Lower lobe of right lung (tissue), 2 donors: ENCODE measurements at regions of chr12 and their contacts with region 1.

Region 1: DNA sequence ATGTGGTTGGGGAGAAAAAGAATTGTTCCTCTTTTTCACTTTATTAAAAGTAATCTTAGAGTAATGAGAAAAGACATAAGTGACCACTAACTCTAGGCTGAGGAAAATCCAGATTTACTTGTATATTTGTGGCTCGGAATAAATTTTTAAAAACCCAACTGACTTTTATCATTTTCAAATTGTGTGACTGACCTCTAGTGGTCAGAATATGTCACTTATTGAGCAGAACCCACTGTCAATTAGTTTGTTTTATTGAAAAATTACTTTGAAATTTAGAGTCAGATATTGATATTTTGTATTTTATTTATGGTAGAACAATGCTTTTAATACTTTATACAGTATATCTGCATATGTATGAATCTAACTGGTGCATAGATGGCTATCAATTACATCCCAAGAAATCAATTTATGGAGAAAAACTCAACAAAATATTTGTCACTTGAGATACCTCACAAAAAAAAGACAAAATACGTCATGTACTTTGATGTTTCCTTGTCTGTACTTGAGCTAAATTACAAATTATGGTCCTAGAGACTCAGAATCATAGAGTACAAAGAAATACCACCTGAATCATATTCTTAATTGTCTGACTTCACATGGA is 229.4 kb downstream of the CNTN1 start:
- DNase-seq: no peak
- ATAC-seq: no peak
- H3K4me3 ChIP-seq: no peak overlapping the region
- H3K27ac ChIP-seq: no peak overlapping the region
- H3K4me1 ChIP-seq: no peaks in the 10 kb centered on the region
- H3K27me3 ChIP-seq: no peaks in the 10 kb centered on the region
- CTCF ChIP-seq: peak; percentile 65

Region 2: DNA sequence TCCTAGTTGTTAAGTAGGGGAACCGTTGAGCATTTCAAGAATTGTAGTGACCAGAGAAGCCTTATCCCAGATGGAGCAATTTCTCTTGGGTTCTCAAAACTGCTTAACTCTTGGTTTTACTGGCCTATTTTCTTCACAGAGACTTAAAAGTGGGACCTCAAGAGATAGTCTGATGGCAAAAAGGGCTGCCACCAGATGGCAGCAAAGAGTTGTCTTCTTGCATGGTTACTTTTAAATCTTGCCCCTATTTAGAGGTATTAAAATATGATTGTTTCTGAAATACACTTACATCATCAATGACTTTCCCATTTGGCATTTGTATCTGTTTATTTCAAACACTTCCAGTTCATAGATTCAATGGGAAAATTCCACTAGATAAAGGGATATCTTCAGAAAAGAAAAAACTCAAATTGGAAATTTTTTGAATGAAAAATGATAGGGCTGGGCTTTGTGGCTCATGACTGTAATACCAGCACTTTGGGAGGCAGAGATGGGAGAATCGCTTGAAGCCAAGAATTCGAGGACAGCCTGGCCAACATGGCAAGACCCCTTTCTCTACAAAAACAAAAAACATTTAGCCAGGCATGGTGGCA is 299.3 kb before region 1 on chr12:
- intact Hi-C with region 1: loop called (anchors 5 kb)
- DNase-seq: peak; percentile 48
- ATAC-seq: peak in 1 of 2 donors; percentile 65
- H3K4me3 ChIP-seq: no peak overlapping the region
- H3K27ac ChIP-seq: no peak overlapping the region
- H3K4me1 ChIP-seq: no peaks in the 10 kb centered on the region
- H3K27me3 ChIP-seq: no peaks in the 10 kb centered on the region
- CTCF ChIP-seq: peak; percentile 73

Region 3: DNA sequence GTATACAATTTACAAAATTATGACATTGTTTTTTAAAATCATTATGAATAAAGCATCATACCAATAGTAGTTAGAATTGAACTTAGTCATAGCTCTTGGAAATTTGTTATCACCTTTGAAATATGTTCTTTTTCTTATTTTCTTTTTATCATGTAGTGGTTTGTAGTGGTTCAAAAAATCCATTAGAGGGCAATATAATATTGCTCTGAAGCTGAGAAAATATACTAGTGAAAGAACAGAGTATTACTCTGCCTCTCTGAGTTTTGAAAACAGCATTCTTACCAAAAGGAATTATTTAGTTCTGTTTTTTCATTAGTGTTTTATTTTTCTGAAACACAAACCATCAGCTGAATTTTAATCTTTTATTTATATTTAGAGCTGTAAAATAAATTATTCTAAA is 342.6 kb after region 1 on chr12:
- intact Hi-C with region 1: no loop called
- DNase-seq: no peak
- ATAC-seq: no peak
- H3K4me3 ChIP-seq: no peak overlapping the region
- H3K27ac ChIP-seq: no peak overlapping the region
- H3K4me1 ChIP-seq: no peaks in the 10 kb centered on the region
- H3K27me3 ChIP-seq: no peaks in the 10 kb centered on the region
- CTCF ChIP-seq: peak; percentile 42